ENCODE measurements at regions of chr22 and their contacts with region 1.

Region 1: DNA sequence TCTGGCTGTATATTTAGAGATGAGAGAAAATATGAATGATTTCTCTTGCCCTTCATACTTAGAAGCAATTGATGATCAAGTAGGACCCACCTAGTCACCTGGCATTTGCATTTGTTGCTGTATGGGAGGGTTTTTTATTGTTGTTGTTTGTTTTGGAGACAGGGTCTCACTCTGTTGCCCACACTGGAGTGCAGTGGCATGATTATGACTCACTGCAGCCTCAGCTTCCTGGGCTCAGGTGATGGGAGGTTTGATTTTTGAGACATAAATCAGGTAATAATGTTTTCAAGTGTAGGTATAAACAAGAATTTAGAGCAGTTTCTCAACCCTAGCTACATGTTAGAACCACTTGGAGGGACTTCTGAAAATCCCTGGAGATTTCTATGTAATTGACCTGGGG is 63.0 kb downstream of the TNRC6B start:
- DNase-seq: peak; percentile 11
- H3K4me3 Mint-ChIP-seq: no peak overlapping the region
- H3K27ac Mint-ChIP-seq: peak overlapping the region; percentile 74
- H3K4me1 Mint-ChIP-seq: peaks cover 63% of the 10 kb centered on the region
- H3K27me3 Mint-ChIP-seq: no peaks in the 10 kb centered on the region

Region 2: GRCh38 chr22:40050258-40050657 is 190.4 kb before region 1 on chr22:
- intact Hi-C with region 1: loop called (anchors 2 kb)
- DNase-seq: no peak
- H3K4me3 Mint-ChIP-seq: no peak overlapping the region
- H3K27ac Mint-ChIP-seq: peak overlapping the region; percentile 15
- H3K4me1 Mint-ChIP-seq: peaks cover 37% of the 10 kb centered on the region
- H3K27me3 Mint-ChIP-seq: no peaks in the 10 kb centered on the region

Region 3: GRCh38 chr22:40196628-40197360 is 43.9 kb before region 1 on chr22:
- intact Hi-C with region 1: loop called (anchors 2 kb)
- DNase-seq: no peak
- H3K4me3 Mint-ChIP-seq: no peak overlapping the region
- H3K27ac Mint-ChIP-seq: peak overlapping the region; percentile 73
- H3K4me1 Mint-ChIP-seq: peaks cover 50% of the 10 kb centered on the region
- H3K27me3 Mint-ChIP-seq: no peaks in the 10 kb centered on the region

Region 4: DNA sequence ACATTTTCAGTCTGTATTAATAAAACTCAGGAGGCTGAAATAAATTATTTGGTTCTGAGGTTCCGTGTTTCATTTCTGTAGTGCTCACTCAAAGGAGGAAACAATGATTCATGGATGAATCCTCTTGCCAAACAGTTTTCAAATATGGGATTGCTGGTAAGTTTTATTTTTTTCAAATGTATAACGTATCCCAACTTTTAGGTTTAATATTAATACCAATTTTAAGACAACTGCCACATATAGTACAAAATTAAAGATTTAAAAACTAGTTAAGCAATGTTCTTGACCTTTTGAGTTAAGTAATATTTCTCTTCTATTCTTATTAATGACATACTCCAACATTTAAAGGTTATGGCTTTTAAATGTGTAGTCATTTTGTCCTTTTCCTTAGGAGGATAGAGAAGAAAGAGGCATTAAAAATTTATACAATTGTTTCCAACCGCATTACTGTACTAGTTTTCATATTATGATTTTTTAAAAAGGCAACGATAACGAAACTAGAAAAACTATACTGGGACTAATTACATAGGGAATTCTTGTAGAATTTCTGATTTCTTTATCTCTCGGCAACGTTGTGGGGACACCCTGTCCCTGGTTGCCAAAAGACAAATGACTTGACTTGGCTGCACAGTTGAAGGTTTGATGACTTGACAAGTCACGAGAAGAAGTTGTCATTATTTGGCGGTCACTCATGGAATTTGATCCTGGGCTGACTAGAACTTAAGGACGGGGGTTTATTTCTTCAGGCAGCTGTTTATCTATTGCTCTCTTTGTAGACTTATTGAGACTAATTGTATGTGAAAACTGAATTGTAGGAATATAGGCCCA is 36.5 kb after region 1 on chr22:
- intact Hi-C with region 1: loop called (anchors 2 kb)
- DNase-seq: no peak
- H3K4me3 Mint-ChIP-seq: no peak overlapping the region
- H3K27ac Mint-ChIP-seq: peak overlapping the region; percentile 29
- H3K4me1 Mint-ChIP-seq: peaks cover 31% of the 10 kb centered on the region
- H3K27me3 Mint-ChIP-seq: no peaks in the 10 kb centered on the region